Heart right ventricle (tissue), 16 donors: ENCODE measurements at regions of chr18 and their contacts with region 1.

Region 1: GRCh38 chr18:38539373-38539772 is 973.8 kb upstream of the CELF4 start:
- DNase-seq: no peak
- ATAC-seq: no peak
- H3K4me3 ChIP-seq: no peak overlapping the region
- H3K27ac ChIP-seq: no peak overlapping the region
- H3K4me1 ChIP-seq: no peaks in the 10 kb centered on the region
- H3K27me3 ChIP-seq: no peaks in the 10 kb centered on the region
- CTCF ChIP-seq: no peak

Region 2: GRCh38 chr18:38459131-38459994 is 80.0 kb before region 1 on chr18:
- intact Hi-C with region 1: loop called in 1 of 10 experiments (anchors 10 kb)
- DNase-seq: no peak
- ATAC-seq: peak in 4 of 8 donors; percentile 35 to 64 (median 44)
- H3K4me3 ChIP-seq: no peak overlapping the region
- H3K27ac ChIP-seq: peak overlapping the region in 2 of 10 donors; percentile 20 to 26
- H3K4me1 ChIP-seq: peaks cover 0 to 21% (median 0%) of the 10 kb centered on the region in 9 donors
- H3K27me3 ChIP-seq: no peaks in the 10 kb centered on the region
- CTCF ChIP-seq: no peak